GM12878 (cell line): ENCODE measurements at regions of chr12 and their contacts with region 1.

Region 1: GRCh38 chr12:89621521-89621920 is 87.1 kb downstream of the ATP2B1 start:
- DNase-seq: no peak
- ATAC-seq: no peak
- H3K4me3 ChIP-seq: no peak overlapping the region
- H3K27ac ChIP-seq: no peak overlapping the region
- H3K4me1 ChIP-seq: no peaks in the 10 kb centered on the region
- H3K27me3 ChIP-seq: no peaks in the 10 kb centered on the region
- CTCF ChIP-seq: no peak
- EP300 ChIP-seq: no peak
- POLR2A ChIP-seq: no peak
- RAD21 ChIP-seq: no peak

Region 2: GRCh38 chr12:89636052-89636775 is 14.7 kb after region 1 on chr12:
- CTCF ChIA-PET with region 1: interaction called, 3 read pairs
- POLR2A ChIA-PET with region 1: no interaction called
- RAD21 ChIA-PET with region 1: interaction called, 3 read pairs
- SMC1A ChIA-PET with region 1: interaction called, 16 read pairs
- in situ Hi-C with region 1: no loop called
- intact Hi-C with region 1: no loop called
- DNase-seq: no peak
- ATAC-seq: no peak
- H3K4me3 ChIP-seq: no peak overlapping the region
- H3K27ac ChIP-seq: no peak overlapping the region
- H3K4me1 ChIP-seq: no peaks in the 10 kb centered on the region
- H3K27me3 ChIP-seq: no peaks in the 10 kb centered on the region
- CTCF ChIP-seq: no peak
- EP300 ChIP-seq: no peak
- POLR2A ChIP-seq: no peak
- RAD21 ChIP-seq: no peak